Activated CD8-positive, alpha-beta T cell treated with anti-CD3 and anti-CD28 coated beads, Interleukin-2, amount 10 ng/mL, durations not matched to agents 7 days and 5 days (primary cell): ENCODE measurements at regions of chr18 and their contacts with region 1.

Region 1: DNA sequence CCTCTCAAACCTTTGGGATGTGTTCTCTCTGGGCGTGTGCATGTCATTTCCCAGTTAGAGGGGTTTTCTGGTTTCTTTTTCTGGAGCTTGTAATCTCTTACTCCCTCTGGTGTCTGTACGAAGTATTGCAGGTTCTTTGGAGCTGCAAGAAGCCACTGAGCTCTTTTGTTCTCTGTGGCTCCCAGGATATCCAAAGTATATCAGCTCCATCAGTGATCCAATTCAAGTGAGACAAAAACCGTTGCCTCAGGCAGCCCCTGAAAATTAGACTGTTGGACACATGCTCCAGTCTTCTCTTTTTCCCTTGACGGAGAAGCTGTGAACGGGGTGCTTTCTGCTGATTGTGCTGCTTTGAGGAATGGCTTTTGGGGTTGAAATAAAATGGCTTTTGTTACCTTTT is 59.0 kb upstream of the LDLRAD4 start:
- DNase-seq: peak; percentile 65
- ATAC-seq: peak; percentile 47
- H3K4me3 Mint-ChIP-seq: no peak overlapping the region
- H3K27ac Mint-ChIP-seq: no peak overlapping the region
- H3K4me1 Mint-ChIP-seq: peaks cover 3% of the 10 kb centered on the region
- H3K27me3 Mint-ChIP-seq: peaks cover 7% of the 10 kb centered on the region

Region 2: DNA sequence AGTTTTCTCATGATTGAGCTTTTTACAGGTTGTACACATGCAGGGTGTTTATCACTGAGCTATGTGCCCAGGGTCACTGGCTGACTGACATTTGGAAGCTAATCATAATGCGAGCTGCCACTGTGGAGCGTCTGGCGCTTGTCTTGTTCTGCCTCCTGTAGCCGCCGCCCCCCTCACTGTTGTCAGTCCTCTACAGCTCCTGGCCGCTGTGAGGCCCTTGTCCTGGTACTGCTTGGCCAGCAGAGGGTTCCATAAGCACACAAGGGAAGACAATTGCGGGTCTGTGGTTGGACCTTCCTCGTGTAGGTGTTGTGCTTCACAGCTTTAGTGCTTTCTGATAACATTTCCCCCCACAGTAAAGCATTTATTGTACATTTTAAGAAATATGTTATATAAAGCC is 46.6 kb before region 1 on chr18:
- CTCF ChIA-PET with region 1: interaction called, 20 read pairs
- POLR2A ChIA-PET with region 1: no interaction called
- DNase-seq: peak; percentile 34
- ATAC-seq: no peak
- H3K4me3 Mint-ChIP-seq: no peak overlapping the region
- H3K27ac Mint-ChIP-seq: no peak overlapping the region
- H3K4me1 Mint-ChIP-seq: no peaks in the 10 kb centered on the region
- H3K27me3 Mint-ChIP-seq: no peaks in the 10 kb centered on the region

Region 3: DNA sequence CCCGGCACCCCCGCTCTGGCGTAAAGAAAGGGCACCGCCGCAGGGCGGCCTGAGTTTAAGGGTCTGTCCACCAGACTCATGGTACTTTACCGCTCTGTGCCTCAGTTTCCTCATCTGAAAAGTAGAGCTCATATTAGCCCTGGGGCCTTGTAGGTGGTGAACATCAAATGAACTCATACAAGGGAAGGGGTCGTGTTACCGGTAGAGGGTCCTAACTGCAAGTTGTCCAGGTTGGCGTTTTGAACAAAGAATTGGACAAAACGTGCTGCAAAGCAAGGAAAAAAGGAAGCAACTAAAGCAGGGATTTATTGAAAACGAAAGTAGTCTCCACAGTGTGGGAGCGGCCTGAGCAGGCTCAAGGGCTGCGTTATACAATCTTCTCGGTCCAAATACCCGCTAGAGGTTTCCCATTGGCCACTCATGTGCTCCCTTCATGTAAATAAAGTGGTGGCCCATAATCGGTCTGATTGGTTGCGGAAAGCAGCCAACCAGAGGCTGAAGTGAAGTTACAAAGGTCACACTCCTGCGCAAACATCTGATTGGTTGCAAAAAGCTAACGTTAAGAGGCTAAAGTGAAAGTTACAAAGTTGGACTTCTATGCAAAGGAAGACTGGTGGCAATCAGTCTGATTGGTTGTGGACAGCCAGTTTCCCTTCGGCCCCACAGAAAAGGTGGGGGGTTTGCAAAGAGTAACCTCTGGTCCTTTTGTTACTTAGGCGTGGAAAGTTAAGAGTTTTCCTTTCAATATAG is 21.7 kb before region 1 on chr18:
- CTCF ChIA-PET with region 1: interaction called, 23 read pairs
- POLR2A ChIA-PET with region 1: no interaction called
- DNase-seq: peak; percentile 92
- ATAC-seq: peak; percentile 91
- H3K4me3 Mint-ChIP-seq: peak overlapping the region; percentile 98
- H3K27ac Mint-ChIP-seq: peak overlapping the region; percentile 98
- H3K4me1 Mint-ChIP-seq: peaks cover 32% of the 10 kb centered on the region
- H3K27me3 Mint-ChIP-seq: no peaks in the 10 kb centered on the region

Region 4: GRCh38 chr18:13175754-13176210 is 16.2 kb after region 1 on chr18:
- CTCF ChIA-PET with region 1: interaction called, 37 read pairs
- POLR2A ChIA-PET with region 1: no interaction called
- DNase-seq: no peak
- ATAC-seq: no peak
- H3K4me3 Mint-ChIP-seq: no peak overlapping the region
- H3K27ac Mint-ChIP-seq: no peak overlapping the region
- H3K4me1 Mint-ChIP-seq: peaks cover 20% of the 10 kb centered on the region
- H3K27me3 Mint-ChIP-seq: peaks cover 10% of the 10 kb centered on the region